Head of caudate nucleus (tissue), 42 donors: ENCODE measurements at regions of chr7 and their contacts with region 1.

Region 1: GRCh38 chr7:100705753-100706671 is at the start of gene POP7:
- DNase-seq: peak; percentile 92 to 99 (median 97)

Region 2: GRCh38 chr7:100852048-100852872 is 146.2 kb after region 1 on chr7 and contains the start of gene SLC12A9:
- intact Hi-C with region 1: loop called (anchors 5 kb)
- DNase-seq: peak; percentile 77 to 96 (median 92)